ENCODE measurements at regions of chr6 and their contacts with region 1.

Region 1: GRCh38 chr6:109073344-109074132 is 21.1 kb downstream of the SESN1 start:
- DNase-seq: peak; percentile 54
- ATAC-seq: peak; percentile 72
- H3K4me3 Mint-ChIP-seq: no peak overlapping the region
- H3K27ac Mint-ChIP-seq: no peak overlapping the region
- H3K4me1 Mint-ChIP-seq: peaks cover 25% of the 10 kb centered on the region
- H3K27me3 Mint-ChIP-seq: no peaks in the 10 kb centered on the region
- CTCF ChIP-seq: peak; percentile 82

Region 2: GRCh38 chr6:108541838-108542759 is 531.4 kb before region 1 on chr6:
- CTCF ChIA-PET with region 1: interaction called, 81 read pairs
- POLR2A ChIA-PET with region 1: interaction called, 4 read pairs
- intact Hi-C with region 1: loop called (anchors 1 kb)
- DNase-seq: peak; percentile 79
- ATAC-seq: peak; percentile 91
- H3K4me3 Mint-ChIP-seq: peak overlapping the region; percentile 48
- H3K27ac Mint-ChIP-seq: no peak overlapping the region
- H3K4me1 Mint-ChIP-seq: peaks cover 13% of the 10 kb centered on the region
- H3K27me3 Mint-ChIP-seq: peaks cover 10% of the 10 kb centered on the region
- CTCF ChIP-seq: peak; percentile 94

Region 3: DNA sequence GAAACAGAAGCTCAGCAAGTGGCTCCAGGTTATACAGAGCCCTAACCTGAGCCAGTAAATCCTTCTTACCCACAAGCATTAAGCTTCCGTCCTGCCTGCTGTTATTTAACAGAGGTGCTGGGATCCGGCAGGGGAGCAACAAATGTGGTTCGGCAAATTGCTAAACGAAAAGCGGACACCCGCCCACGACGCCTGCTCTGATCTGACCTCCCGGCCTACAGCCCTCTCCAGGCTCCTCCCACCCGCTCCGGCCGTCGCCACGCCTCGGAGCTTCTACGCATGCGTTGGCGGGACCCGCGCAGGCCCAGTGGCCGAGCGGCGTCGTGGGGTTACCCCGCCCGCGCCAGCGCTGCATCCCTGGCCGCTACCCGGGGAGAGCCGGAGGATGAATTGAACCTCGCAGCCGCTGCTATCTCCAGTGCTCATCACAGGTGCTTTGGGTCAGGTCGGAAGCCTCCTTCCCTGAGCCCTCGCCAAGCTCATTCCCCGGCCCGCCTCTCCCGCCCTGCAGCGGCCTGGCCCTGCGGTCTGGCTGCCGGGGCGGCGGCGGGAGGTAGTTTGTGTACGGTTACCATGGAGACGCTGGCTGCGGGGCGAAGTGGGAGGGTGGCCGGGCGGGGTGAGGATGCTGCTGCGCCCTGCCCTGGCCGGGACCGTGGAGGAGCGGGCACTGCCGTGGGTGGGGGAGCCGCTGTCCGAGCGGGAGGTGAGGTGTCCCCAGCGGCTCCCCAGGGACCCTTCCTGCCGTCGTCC is 225.2 kb before region 1 on chr6 and contains the start of gene ARMC2:
- CTCF ChIA-PET with region 1: interaction called, 19 read pairs
- POLR2A ChIA-PET with region 1: no interaction called
- intact Hi-C with region 1: loop called (anchors 10 kb)
- DNase-seq: peak; percentile 86
- ATAC-seq: peak; percentile 95
- H3K4me3 Mint-ChIP-seq: peak within 1 kb of the TSS; percentile 75
- H3K27ac Mint-ChIP-seq: peak within 1 kb of the TSS; percentile 75
- H3K4me1 Mint-ChIP-seq: peaks cover 33% of the 10 kb centered on the region
- H3K27me3 Mint-ChIP-seq: no peaks in the 10 kb centered on the region
- CTCF ChIP-seq: no peak
- total RNA-seq, gene ARMC2: 2.7 to 4.6 TPM

Region 4: GRCh38 chr6:108904741-108905140 is 168.8 kb before region 1 on chr6:
- CTCF ChIA-PET with region 1: interaction called, 28 read pairs
- POLR2A ChIA-PET with region 1: no interaction called
- intact Hi-C with region 1: no loop called
- DNase-seq: peak; percentile 62
- ATAC-seq: peak; percentile 57
- H3K4me3 Mint-ChIP-seq: no peak overlapping the region
- H3K27ac Mint-ChIP-seq: no peak overlapping the region
- H3K4me1 Mint-ChIP-seq: peaks cover 27% of the 10 kb centered on the region
- H3K27me3 Mint-ChIP-seq: no peaks in the 10 kb centered on the region
- CTCF ChIP-seq: no peak

Region 5: DNA sequence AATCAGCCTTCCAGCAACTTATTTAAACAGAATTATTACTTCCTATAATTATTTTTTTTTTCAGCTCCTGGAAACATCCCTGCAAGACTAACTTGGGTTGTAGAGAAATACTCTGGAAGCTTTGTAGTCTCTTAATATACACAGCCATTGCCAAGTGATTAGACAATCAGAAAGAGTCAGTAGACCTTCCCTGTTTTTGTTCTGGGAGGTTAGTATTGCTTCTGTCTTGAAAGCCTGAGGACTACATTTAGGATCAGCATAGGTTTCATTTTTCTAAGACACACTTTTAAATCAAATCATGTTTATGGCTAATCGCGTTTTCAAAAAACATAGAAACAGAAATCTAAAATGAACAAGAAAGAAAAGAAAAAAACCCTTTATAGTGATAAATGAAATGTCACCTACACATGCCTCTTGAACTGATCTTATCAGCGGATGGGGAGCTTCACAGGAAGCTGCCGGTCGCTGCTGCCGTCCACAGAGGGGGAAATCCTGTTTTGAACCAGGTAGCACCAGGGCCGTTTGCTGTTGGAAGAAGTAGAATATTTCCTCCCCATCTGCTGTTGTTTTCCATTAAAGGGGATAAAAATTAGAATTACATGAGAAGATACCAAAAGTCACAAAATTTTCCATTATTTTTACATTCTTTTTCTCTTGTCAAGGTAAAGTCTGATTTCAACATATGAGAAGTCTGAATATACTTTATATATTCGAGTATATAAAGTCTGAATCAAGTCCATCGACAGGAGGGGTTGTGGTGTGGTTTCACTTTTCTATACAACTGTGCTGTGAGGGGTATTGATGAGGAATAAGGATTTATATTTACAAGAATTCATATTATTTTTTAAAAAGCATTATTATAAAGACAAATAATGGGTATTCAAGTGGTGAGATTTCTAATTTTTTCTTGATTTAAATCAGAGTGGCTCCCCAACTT is 130.7 kb before region 1 on chr6:
- CTCF ChIA-PET with region 1: interaction called, 29 read pairs
- POLR2A ChIA-PET with region 1: no interaction called
- intact Hi-C with region 1: no loop called
- DNase-seq: peak; percentile 76
- ATAC-seq: peak; percentile 97
- H3K4me3 Mint-ChIP-seq: peak overlapping the region; percentile 61
- H3K27ac Mint-ChIP-seq: peak overlapping the region; percentile 85
- H3K4me1 Mint-ChIP-seq: peaks cover 46% of the 10 kb centered on the region
- H3K27me3 Mint-ChIP-seq: no peaks in the 10 kb centered on the region
- CTCF ChIP-seq: no peak

Region 6: DNA sequence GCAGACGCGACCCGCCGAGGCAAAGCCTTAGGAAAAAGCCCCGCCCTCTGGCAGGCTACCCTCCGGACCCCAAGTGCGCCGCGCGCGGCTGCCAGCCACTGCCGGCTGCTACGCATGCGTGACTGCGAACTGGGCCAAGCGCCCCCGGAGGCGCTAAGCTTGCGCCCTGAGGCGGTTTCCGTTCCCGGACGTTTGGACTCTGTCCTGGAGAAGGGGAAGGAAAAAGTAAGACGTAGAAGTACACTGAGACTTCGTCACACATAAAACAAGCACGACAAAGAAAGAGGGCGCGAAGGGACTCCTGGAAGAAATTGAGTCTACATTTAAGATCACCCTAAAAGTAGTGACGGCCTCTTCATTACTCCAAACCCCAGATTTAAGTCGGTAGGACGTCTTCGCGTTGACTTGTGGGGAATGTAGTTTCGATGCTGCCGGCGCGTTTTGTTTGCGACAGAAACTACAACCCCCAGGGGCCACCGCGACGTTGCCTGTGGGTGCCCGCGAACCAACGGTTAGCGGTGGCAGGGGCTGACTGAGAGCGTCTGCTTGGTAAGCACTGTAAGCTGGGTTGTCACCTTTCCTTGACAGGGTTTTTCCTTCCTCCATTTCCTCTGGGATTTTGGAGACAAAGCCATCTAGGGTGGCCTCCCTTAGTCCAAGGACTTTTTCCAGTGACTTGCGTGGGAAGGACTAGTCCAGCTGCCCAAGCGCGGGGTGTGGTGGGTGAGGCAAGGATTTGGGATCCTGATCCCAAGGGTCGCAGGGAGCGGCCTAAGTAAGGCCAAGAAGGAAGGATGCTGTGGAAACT is 21.7 kb after region 1 on chr6 and contains the start of gene CEP57L1:
- CTCF ChIA-PET with region 1: interaction called, 18 read pairs
- POLR2A ChIA-PET with region 1: no interaction called
- intact Hi-C with region 1: no loop called
- DNase-seq: peak; percentile 97
- ATAC-seq: peak; percentile 80
- H3K4me3 Mint-ChIP-seq: peak within 1 kb of the TSS; percentile 89
- H3K27ac Mint-ChIP-seq: peak within 1 kb of the TSS; percentile 99
- H3K4me1 Mint-ChIP-seq: peaks cover 36% of the 10 kb centered on the region
- H3K27me3 Mint-ChIP-seq: no peaks in the 10 kb centered on the region
- CTCF ChIP-seq: no peak
- total RNA-seq, gene CEP57L1: 25.0 to 25.8 TPM

Region 7: GRCh38 chr6:109229536-109229935 is 156.0 kb after region 1 on chr6:
- CTCF ChIA-PET with region 1: no interaction called
- POLR2A ChIA-PET with region 1: no interaction called
- intact Hi-C with region 1: no loop called
- DNase-seq: no peak
- ATAC-seq: no peak
- H3K4me3 Mint-ChIP-seq: no peak overlapping the region
- H3K27ac Mint-ChIP-seq: no peak overlapping the region
- H3K4me1 Mint-ChIP-seq: peaks cover 5% of the 10 kb centered on the region
- H3K27me3 Mint-ChIP-seq: no peaks in the 10 kb centered on the region
- CTCF ChIP-seq: no peak

Region 8: GRCh38 chr6:109579361-109579760 is 505.8 kb after region 1 on chr6:
- CTCF ChIA-PET with region 1: no interaction called
- POLR2A ChIA-PET with region 1: no interaction called
- intact Hi-C with region 1: no loop called
- DNase-seq: no peak
- ATAC-seq: no peak
- H3K4me3 Mint-ChIP-seq: no peak overlapping the region
- H3K27ac Mint-ChIP-seq: no peak overlapping the region
- H3K4me1 Mint-ChIP-seq: no peaks in the 10 kb centered on the region
- H3K27me3 Mint-ChIP-seq: no peaks in the 10 kb centered on the region
- CTCF ChIP-seq: no peak